Naive thymus-derived CD4-positive, alpha-beta T cell (primary cell): ENCODE measurements at regions of chr1 and their contacts with region 1.

Region 1: DNA sequence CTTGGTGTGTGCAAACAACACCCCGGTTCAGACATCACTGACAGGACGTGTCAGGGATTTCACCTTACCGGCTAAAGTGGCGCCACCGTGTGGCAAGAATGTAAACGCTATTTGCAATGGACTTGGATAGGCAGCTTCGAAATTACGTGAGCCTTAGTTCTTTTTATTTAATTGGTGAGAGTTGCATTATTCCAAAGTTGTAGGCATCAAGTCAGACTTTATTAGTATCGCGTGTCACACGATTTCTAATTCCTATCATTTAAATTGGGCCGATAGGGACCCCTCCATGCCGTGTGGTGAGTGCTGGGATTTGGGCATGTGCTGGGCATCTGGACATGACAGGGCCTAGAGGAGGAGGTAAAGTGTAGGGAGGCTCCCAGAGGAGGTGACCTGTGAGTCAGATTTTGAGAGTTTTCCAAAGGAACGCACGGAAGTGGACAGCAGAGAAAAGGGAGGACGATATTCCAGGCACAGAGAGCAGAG is 14.5 kb upstream of the CPT2 start:
- DNase-seq: peak; percentile 44 to 76 (median 69)
- ATAC-seq: peak; percentile 90
- H3K4me3 ChIP-seq: no peak overlapping the region
- H3K4me3 Mint-ChIP-seq: no peak overlapping the region
- H3K27ac ChIP-seq: no peak overlapping the region
- H3K27ac Mint-ChIP-seq: no peak overlapping the region
- H3K4me1 ChIP-seq: no peaks in the 10 kb centered on the region
- H3K4me1 Mint-ChIP-seq: no peaks in the 10 kb centered on the region
- H3K27me3 ChIP-seq: no peaks in the 10 kb centered on the region
- H3K27me3 Mint-ChIP-seq: peaks cover 4 to 25% (median 6%) of the 10 kb centered on the region in 5 donors

Region 2: GRCh38 chr1:51897699-51898031 is 1284.5 kb before region 1 on chr1:
- CTCF ChIA-PET with region 1: no interaction called
- POLR2A ChIA-PET with region 1: no interaction called
- intact Hi-C with region 1: loop called in 1 of 2 experiments (anchors 2 kb)
- DNase-seq: no peak
- ATAC-seq: no peak
- H3K4me3 ChIP-seq: no peak overlapping the region
- H3K4me3 Mint-ChIP-seq: no peak overlapping the region
- H3K27ac ChIP-seq: no peak overlapping the region
- H3K27ac Mint-ChIP-seq: no peak overlapping the region
- H3K4me1 ChIP-seq: no peaks in the 10 kb centered on the region
- H3K4me1 Mint-ChIP-seq: peaks cover 0 to 4% (median 0%) of the 10 kb centered on the region in 7 donors
- H3K27me3 ChIP-seq: peaks cover 0 to 3% of the 10 kb centered on the region in 2 donors
- H3K27me3 Mint-ChIP-seq: peaks cover 24 to 55% (median 50%) of the 10 kb centered on the region in 5 donors

Region 3: GRCh38 chr1:52904927-52905698 is 277.0 kb before region 1 on chr1:
- CTCF ChIA-PET with region 1: no interaction called
- POLR2A ChIA-PET with region 1: no interaction called
- intact Hi-C with region 1: loop called in 1 of 2 experiments (anchors 1 kb)
- DNase-seq: peak in 6 of 9 donors; percentile 25 to 36 (median 30)
- ATAC-seq: peak; percentile 71
- H3K4me3 ChIP-seq: no peak overlapping the region
- H3K4me3 Mint-ChIP-seq: no peak overlapping the region
- H3K27ac ChIP-seq: no peak overlapping the region
- H3K27ac Mint-ChIP-seq: peak overlapping the region in 2 of 9 donors; percentile 22 to 66
- H3K4me1 ChIP-seq: no peaks in the 10 kb centered on the region
- H3K4me1 Mint-ChIP-seq: peaks cover 0 to 7% (median 0%) of the 10 kb centered on the region in 7 donors
- H3K27me3 ChIP-seq: no peaks in the 10 kb centered on the region
- H3K27me3 Mint-ChIP-seq: no peaks in the 10 kb centered on the region

Region 4: DNA sequence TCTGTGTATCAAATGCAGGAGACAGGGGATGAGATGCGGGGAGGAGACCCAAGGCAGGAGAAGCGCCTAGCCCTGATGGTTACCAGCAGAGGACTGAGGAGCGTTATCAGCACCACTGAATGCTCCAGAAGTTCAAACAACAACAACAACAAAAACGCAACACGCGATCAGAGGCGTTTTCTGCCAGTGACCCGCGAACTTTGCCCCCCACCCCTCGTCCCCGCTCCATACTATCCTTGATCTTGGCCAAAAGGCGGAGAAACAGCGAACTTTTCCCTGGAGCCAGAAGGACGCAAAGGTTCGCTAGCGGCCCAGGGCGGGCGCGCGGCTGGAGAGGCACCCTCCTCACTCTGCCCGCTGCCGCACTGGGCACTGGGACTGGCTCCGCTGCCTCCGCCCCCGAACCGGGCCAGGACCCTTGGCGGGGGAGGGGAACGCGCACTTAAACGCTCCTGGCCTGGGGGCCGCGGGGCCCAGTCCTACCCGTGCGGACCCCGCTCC is 261.3 kb before region 1 on chr1:
- CTCF ChIA-PET with region 1: interaction called, 3 read pairs
- POLR2A ChIA-PET with region 1: no interaction called
- intact Hi-C with region 1: loop called (anchors 5 kb)
- DNase-seq: no peak
- ATAC-seq: no peak
- H3K4me3 ChIP-seq: peak overlapping the region; percentile 67
- H3K4me3 Mint-ChIP-seq: peak overlapping the region; percentile 65 to 89 (median 84)
- H3K27ac ChIP-seq: peak overlapping the region; percentile 74
- H3K27ac Mint-ChIP-seq: peak overlapping the region; percentile 51 to 86 (median 70)
- H3K4me1 ChIP-seq: peaks cover 0 to 12% of the 10 kb centered on the region in 2 donors
- H3K4me1 Mint-ChIP-seq: peaks cover 16 to 41% (median 31%) of the 10 kb centered on the region in 7 donors
- H3K27me3 ChIP-seq: no peaks in the 10 kb centered on the region
- H3K27me3 Mint-ChIP-seq: peaks cover 0 to 4% (median 0%) of the 10 kb centered on the region in 5 donors

Region 5: GRCh38 chr1:52927212-52928014 is 254.7 kb before region 1 on chr1 and contains the start of gene SCP2:
- CTCF ChIA-PET with region 1: no interaction called
- POLR2A ChIA-PET with region 1: no interaction called
- intact Hi-C with region 1: loop called (anchors 5 kb)
- DNase-seq: peak; percentile 64 to 83 (median 75)
- ATAC-seq: peak; percentile 96
- H3K4me3 ChIP-seq: peak within 1 kb of the TSS; percentile 87
- H3K4me3 Mint-ChIP-seq: peak within 1 kb of the TSS; percentile 82 to 96 (median 88)
- H3K27ac ChIP-seq: peak within 1 kb of the TSS; percentile 77
- H3K27ac Mint-ChIP-seq: peak within 1 kb of the TSS; percentile 33 to 93 (median 75)
- H3K4me1 ChIP-seq: peaks cover 4 to 7% of the 10 kb centered on the region in 2 donors
- H3K4me1 Mint-ChIP-seq: peaks cover 16 to 41% (median 27%) of the 10 kb centered on the region in 7 donors
- H3K27me3 ChIP-seq: no peaks in the 10 kb centered on the region
- H3K27me3 Mint-ChIP-seq: peaks cover 0 to 6% (median 0%) of the 10 kb centered on the region in 5 donors
- total RNA-seq, gene SCP2: 39.4 to 88.7 (median 48.3) TPM